ENCODE measurements at regions of chr12 and their contacts with region 1.

Region 1: GRCh38 chr12:31238764-31239387 is 87.1 kb downstream of the SINHCAF start:
- DNase-seq: no peak
- H3K4me3 ChIP-seq: no peak overlapping the region
- H3K27ac ChIP-seq: no peak overlapping the region
- H3K4me1 ChIP-seq: peaks cover 0 to 10% (median 0%) of the 10 kb centered on the region in 6 donors
- H3K27me3 ChIP-seq: peaks cover 0 to 56% (median 3%) of the 10 kb centered on the region in 7 donors
- CTCF ChIP-seq: peak in 10 of 11 experiments; percentile 13 to 69 (median 58)
- POLR2A ChIP-seq: no peak

Region 2: GRCh38 chr12:30847259-30847658 is 391.6 kb before region 1 on chr12:
- intact Hi-C with region 1: loop called (anchors 2 kb)
- DNase-seq: no peak
- H3K4me3 ChIP-seq: no peak overlapping the region
- H3K27ac ChIP-seq: no peak overlapping the region
- H3K4me1 ChIP-seq: peaks cover 0 to 19% (median 6%) of the 10 kb centered on the region in 6 donors
- H3K27me3 ChIP-seq: no peaks in the 10 kb centered on the region
- CTCF ChIP-seq: peak in 10 of 11 experiments; percentile 41 to 76 (median 66)
- POLR2A ChIP-seq: no peak

Region 3: DNA sequence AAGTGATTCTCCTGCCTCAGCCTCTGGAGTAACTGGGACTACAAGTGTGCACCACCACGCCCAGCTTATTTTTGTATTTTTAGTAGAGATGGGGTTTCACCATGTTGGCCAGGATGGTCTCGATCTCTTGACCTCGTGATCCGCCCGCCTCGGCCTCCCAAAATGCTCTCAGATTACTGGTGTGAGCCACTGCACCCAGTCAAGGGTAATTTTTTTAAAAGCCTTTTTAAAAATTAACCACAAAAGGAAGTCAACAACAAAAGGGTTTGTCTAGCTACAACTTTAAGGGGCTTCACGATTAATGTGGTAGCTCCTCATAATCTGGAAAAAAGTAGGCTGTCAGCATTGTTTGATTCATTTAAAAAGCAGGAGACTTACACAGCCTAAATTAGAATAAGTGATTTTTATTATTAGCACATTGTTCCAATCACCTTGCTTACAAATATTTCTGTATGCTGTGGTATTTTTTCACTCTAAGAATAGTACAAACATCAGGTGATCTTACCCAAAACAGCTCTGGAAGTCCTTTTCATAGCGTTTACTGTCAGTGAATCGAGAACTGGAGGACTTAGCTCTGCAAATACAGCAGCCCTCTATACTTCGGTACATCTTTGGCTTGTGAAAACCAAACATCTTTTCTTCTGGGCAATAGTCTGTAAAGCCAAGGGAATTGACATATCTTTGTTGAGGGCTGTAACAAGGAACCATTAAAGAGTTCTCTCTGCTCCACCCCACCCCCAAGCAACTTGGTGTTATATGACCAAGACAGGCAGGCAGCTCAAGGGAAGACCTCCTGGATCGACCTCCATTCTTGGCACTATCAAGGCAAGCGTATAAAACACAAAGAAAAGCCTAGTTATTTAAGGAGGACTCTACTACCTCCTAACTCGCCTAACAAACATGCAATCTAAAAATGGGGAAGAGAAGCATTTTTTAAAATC is 59.0 kb after region 1 on chr12:
- intact Hi-C with region 1: no loop called
- DNase-seq: no peak
- H3K4me3 ChIP-seq: no peak overlapping the region
- H3K27ac ChIP-seq: peak overlapping the region in 1 of 8 donors; percentile 14
- H3K4me1 ChIP-seq: peaks cover 3 to 42% (median 10%) of the 10 kb centered on the region in 6 donors
- H3K27me3 ChIP-seq: no peaks in the 10 kb centered on the region
- CTCF ChIP-seq: no peak
- POLR2A ChIP-seq: no peak

Measured in spleen (tissue), 13 donors.